ENCODE measurements at regions of chrX and their contacts with region 1.

Region 1: GRCh38 chrX:130139474-130140201 is 26.0 kb downstream of the AIFM1 start:
- DNase-seq: no peak
- H3K4me3 ChIP-seq: no peak overlapping the region
- H3K27ac ChIP-seq: no peak overlapping the region
- H3K4me1 ChIP-seq: no peaks in the 10 kb centered on the region
- H3K27me3 ChIP-seq: peaks cover 0 to 22% of the 10 kb centered on the region in 2 donors
- CTCF ChIP-seq: no peak
- POLR2A ChIP-seq: no peak

Region 2: DNA sequence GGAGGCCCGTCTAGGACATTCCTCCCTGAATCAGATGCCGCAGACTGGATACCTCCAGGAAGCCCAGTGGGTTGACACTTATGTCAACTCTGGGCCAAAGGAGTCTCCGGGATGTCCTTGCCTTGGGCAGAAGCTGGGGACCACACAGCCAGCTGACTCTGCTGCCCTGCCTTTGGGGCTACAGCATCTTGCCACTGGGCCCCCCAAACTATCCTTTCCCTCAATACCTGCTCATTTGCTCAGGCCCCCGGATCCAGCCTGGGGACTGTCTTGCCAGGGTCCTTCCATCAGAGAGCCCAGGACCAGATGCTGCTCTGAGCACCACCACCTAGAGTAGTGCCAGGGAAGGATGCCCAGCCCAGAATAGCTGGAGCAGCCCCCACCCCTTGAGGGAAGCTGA is 51.2 kb after region 1 on chrX:
- intact Hi-C with region 1: loop called (anchors 2 kb)
- DNase-seq: no peak
- H3K4me3 ChIP-seq: no peak overlapping the region
- H3K27ac ChIP-seq: no peak overlapping the region
- H3K4me1 ChIP-seq: no peaks in the 10 kb centered on the region
- H3K27me3 ChIP-seq: peaks cover 0 to 32% of the 10 kb centered on the region in 2 donors
- CTCF ChIP-seq: no peak
- POLR2A ChIP-seq: no peak